Activated CD4-positive, alpha-beta T cell treated with anti-CD3 and anti-CD28 coated beads for 36 hours (primary cell): ENCODE measurements at regions of chr12 and their contacts with region 1.

Region 1: DNA sequence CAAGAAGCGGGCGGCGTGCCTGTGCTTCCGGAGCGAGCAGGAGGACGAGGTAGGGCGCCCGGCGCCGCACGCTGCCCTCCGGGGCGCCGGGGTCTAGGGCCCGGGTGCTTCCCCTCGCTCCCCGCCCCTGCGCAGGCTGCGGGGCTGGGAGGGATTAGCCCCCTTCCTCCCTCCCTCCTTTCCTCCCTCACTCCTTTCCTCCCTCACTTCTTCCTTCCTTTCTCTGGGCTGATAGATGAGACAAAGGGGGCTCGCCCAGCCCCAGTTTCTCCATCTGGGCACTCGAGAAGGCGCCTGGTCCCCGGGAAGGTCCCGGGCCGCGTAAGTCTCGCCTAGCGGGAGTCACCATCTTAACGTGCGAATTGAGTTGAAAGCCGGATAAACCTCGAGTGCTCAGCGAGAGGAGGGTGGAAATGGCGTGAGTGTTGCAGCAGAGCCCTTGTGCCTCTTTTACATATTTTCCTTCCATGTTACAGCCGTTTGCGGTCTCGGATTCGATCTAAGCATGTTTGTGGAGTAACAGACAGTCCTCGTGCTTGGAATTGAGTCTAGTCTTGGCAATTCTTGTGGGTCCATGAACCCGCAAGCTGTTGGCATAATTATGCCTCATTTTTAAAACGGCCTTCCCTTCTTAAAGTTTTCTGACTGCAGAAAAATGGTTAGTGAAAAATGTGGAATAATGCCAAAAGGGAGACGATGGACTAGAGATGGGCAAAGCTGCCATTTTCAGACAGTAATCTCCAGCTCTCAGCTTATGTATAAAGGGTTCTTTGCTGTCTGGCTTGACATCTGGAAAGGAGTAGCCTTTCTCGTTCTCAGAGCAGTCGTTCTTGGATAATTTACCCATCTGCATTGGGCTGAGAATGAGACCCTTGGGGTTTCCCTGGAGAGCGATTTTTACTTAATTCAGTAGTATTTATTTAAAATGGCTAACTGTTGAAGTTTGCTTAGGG is 924 bp downstream of the NUDT4 start:
- DNase-seq: peak; percentile 76
- ATAC-seq: peak; percentile 66
- H3K4me3 Mint-ChIP-seq: peak overlapping the region; percentile 98
- H3K27ac Mint-ChIP-seq: peak overlapping the region; percentile 99
- H3K4me1 Mint-ChIP-seq: peaks cover 42% of the 10 kb centered on the region
- H3K27me3 Mint-ChIP-seq: no peaks in the 10 kb centered on the region

Region 2: GRCh38 chr12:93042283-93042682 is 336.4 kb before region 1 on chr12:
- CTCF ChIA-PET with region 1: no interaction called
- POLR2A ChIA-PET with region 1: no interaction called
- intact Hi-C with region 1: no loop called
- DNase-seq: no peak
- ATAC-seq: no peak
- H3K4me3 Mint-ChIP-seq: no peak overlapping the region
- H3K27ac Mint-ChIP-seq: no peak overlapping the region
- H3K4me1 Mint-ChIP-seq: no peaks in the 10 kb centered on the region
- H3K27me3 Mint-ChIP-seq: peaks cover 3% of the 10 kb centered on the region

Region 3: DNA sequence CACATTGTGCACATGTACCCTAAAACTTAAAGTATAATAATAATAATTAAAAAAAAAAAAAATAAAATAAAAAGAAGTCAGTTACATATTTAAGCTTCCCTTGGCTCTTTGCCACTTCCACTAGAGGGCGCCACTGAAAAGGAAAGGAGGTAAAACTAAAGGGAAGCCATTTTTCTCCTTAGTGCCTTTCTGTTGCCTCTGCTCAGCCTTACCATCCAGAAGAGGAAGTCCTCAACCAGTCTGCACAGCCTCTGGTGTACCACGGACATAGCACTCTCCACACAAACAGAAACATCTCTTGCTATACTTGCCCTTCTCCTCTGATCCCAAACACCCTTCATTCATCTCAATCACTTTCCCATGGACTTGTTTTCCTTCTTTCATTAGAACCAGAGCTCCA is 280.6 kb before region 1 on chr12:
- CTCF ChIA-PET with region 1: interaction called, 13 read pairs
- POLR2A ChIA-PET with region 1: no interaction called
- intact Hi-C with region 1: loop called (anchors 5 kb)
- DNase-seq: peak; percentile 84
- ATAC-seq: peak; percentile 87
- H3K4me3 Mint-ChIP-seq: no peak overlapping the region
- H3K27ac Mint-ChIP-seq: peak overlapping the region; percentile 51
- H3K4me1 Mint-ChIP-seq: peaks cover 21% of the 10 kb centered on the region
- H3K27me3 Mint-ChIP-seq: peaks cover 3% of the 10 kb centered on the region

Region 4: GRCh38 chr12:93243689-93244513 is 134.7 kb before region 1 on chr12:
- CTCF ChIA-PET with region 1: interaction called, 3 read pairs
- POLR2A ChIA-PET with region 1: no interaction called
- intact Hi-C with region 1: loop called in 1 of 2 experiments (anchors 5 kb)
- DNase-seq: peak; percentile 29
- ATAC-seq: peak; percentile 59
- H3K4me3 Mint-ChIP-seq: peak overlapping the region; percentile 50
- H3K27ac Mint-ChIP-seq: peak overlapping the region; percentile 75
- H3K4me1 Mint-ChIP-seq: peaks cover 33% of the 10 kb centered on the region
- H3K27me3 Mint-ChIP-seq: no peaks in the 10 kb centered on the region

Region 5: DNA sequence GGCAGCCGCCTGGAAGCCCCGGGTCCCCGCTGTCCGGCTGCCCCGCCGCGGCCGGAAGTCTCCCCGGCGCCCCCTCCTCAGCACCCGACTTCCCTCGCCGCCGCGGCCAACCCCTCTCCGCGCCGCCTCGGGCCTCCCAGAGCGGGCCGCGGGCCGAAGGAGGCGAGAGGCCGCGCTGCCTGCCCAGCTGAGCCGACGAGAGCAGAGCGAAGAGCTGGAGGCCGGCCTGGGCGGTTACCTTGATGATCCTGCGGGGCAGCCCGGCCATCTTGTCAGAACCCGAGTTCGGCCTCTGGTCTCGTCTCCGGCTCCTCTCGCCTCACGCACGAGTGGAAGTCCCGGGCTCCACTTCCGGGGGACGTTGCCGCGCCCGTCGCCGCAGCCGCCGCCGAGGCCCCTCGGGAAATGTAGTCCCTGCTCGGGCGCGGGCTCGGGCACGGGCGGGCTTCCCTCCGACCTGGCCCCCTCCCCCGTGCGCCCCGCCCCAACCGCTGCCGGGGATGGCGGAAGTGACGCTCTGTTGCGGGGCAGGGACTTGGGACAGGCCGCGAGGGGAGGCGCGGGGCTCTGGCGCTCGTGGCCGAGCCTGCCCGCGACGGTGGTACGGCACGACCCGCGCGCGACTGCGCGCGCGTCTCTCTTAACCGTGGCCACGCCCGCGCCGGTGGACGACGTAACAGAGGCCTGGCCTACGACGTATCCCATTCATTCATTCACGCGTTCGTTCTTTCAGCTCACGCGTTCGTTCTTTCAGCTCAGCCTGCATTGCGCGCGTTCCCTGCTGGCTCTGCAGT is 63.2 kb after region 1 on chr12 and contains the start of gene UBE2N:
- CTCF ChIA-PET with region 1: no interaction called
- POLR2A ChIA-PET with region 1: no interaction called
- intact Hi-C with region 1: loop called (anchors 1 to 2 kb)
- DNase-seq: peak; percentile 98
- ATAC-seq: peak; percentile 84
- H3K4me3 Mint-ChIP-seq: peak within 1 kb of the TSS; percentile 99
- H3K27ac Mint-ChIP-seq: peak within 1 kb of the TSS; percentile 99
- H3K4me1 Mint-ChIP-seq: peaks cover 48% of the 10 kb centered on the region
- H3K27me3 Mint-ChIP-seq: no peaks in the 10 kb centered on the region
- total RNA-seq, gene UBE2N: 186 to 279 TPM